ENCODE measurements at regions of chr11 and their contacts with region 1.

Region 1: GRCh38 chr11:7115780-7116179 is 27.0 kb downstream of the RBMXL2 start:
- DNase-seq: no peak
- ATAC-seq: no peak
- H3K4me3 ChIP-seq: no peak overlapping the region
- H3K27ac ChIP-seq: no peak overlapping the region
- H3K4me1 ChIP-seq: no peaks in the 10 kb centered on the region
- H3K27me3 ChIP-seq: peaks cover 0 to 4% (median 3%) of the 10 kb centered on the region in 3 donors
- CTCF ChIP-seq: no peak

Region 2: DNA sequence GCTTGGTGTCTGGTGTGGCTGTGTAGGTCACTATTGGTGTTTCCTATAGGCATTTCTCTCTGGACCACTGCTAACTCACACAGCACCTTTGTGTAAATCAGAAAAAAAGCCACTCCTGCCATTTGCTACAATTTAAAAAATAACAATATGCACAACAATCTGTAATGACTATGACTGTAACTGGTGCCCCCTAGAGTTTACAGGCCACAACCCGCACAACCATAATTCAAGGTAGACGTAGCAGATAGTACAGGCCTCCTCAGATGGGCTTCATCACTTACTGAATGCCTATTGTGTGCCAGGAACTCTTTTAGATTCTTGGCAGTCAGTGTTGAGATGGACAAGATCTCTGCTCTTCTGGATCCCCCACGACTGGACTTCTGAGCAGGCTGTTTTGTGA is 183.6 kb after region 1 on chr11:
- intact Hi-C with region 1: loop called in 1 of 2 experiments (anchors 10 kb)
- DNase-seq: no peak
- ATAC-seq: no peak
- H3K4me3 ChIP-seq: no peak overlapping the region
- H3K27ac ChIP-seq: no peak overlapping the region
- H3K4me1 ChIP-seq: no peaks in the 10 kb centered on the region
- H3K27me3 ChIP-seq: peaks cover 0 to 2% (median 0%) of the 10 kb centered on the region in 3 donors
- CTCF ChIP-seq: no peak